Heart right ventricle (tissue), 16 donors: ENCODE measurements at regions of chr5 and their contacts with region 1.

Region 1: DNA sequence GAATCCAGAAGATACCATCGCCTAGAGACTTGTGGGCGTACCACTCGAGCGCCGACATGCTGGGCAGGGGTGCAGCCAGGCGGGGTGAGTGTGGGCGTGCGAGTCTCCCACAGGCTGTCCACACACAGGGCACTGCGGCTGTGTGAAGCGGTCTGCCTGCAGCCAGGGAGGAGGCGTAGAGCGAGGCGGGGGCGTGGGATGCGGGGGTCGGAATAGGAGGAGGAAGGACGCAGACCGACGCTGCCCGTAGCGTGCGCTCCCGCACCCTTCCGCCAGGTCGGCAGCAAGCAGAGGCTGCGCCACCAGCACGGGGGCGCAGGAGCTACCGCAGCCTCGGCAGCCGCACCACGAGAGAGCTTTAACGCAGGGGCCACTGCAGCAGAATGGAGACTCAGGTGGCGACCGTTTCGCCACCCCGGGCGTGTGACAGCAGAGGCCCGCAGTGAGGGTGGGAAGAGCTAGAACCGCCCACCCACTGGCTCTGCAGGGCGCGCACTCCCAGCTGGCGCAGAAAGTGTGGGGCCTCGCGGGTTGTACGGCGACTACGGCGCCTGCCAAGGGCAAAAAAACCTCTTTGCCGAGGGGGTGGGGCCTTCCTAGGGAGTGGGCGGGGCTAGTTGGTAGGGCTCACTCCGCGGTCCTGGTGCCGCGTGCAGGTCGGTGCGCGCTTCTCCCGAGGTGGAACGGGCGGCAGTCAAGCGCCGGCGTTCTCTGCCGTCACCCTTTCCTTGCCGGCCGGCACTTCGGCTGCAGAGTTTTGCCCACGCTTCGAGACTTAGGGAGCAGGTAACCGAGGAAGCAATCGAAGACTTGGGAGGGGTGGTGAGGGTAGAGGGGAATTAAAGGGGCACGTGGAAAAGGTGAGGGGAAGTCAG is at the starts of genes MBLAC2 and POLR3G:
- DNase-seq: peak; percentile 91 to 93
- ATAC-seq: peak; percentile 97 to 99 (median 98)
- H3K4me3 ChIP-seq: peak within 1 kb of the TSS; percentile 65 to 95 (median 82)
- H3K27ac ChIP-seq: peak within 1 kb of the TSS; percentile 8 to 91 (median 82)
- H3K4me1 ChIP-seq: peaks cover 0 to 30% (median 19%) of the 10 kb centered on the region in 9 donors
- H3K27me3 ChIP-seq: no peaks in the 10 kb centered on the region
- CTCF ChIP-seq: peak in 7 of 9 donors; percentile 14 to 60 (median 50)
- total RNA-seq, gene MBLAC2: 3.1 to 4.8 (median 3.5) TPM
- total RNA-seq, gene POLR3G: 0.13 to 2.1 (median 0.54) TPM

Region 2: DNA sequence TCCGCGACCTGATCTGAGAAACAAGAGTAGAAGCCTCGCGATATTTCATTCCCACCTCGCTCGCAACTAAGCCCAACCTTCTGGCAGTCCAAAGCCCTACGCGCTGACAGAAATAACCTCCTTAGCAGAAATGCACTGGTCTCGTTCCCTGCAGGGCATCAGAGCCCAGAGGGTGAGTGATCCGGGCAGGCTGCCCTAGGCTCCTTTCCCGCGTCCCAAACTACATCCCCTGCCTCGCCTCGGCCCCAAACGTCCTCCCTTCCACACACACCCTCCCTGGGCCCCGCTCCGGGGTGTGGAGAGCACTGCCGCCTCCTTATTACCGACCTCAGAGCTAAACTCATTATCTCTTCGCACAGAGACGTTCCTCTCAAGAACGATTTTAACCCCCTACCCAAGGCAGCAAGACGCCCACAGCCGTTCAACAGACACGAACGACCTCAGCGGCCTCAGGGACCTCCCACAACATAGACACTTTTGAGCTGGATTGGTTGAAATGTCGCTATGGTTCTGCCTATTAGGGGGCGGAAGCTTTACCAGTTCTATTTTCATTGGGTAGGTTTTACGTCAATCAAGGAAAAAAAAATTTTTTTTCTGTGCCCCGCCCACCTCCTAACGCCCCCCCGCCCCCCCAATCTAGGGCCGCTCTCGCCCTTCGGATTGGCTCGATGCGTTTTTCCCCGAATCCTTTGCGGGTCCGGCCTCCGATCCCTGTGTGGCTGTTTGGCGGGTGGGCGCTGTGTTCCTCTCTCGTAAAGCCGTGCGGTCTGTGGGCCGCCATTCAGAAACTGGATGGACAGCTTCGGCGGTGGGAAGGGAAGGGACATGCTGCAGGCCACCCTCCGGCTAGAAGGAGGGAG is 64.9 kb before region 1 on chr5 and contains the start of gene CETN3:
- intact Hi-C with region 1: loop called in 2 of 10 experiments (anchors 5 kb)
- DNase-seq: peak; percentile 90 to 94
- ATAC-seq: peak; percentile 98 to 99 (median 98)
- H3K4me3 ChIP-seq: peak within 1 kb of the TSS; percentile 63 to 97 (median 82)
- H3K27ac ChIP-seq: peak within 1 kb of the TSS; percentile 88 to 98 (median 96)
- H3K4me1 ChIP-seq: peaks cover 0 to 35% (median 11%) of the 10 kb centered on the region in 9 donors
- H3K27me3 ChIP-seq: no peaks in the 10 kb centered on the region
- CTCF ChIP-seq: peak in 2 of 9 donors; percentile 7 to 25
- total RNA-seq, gene CETN3: 17.2 to 26.6 (median 21.3) TPM

Region 3: GRCh38 chr5:90440644-90441043 is 33.8 kb before region 1 on chr5:
- intact Hi-C with region 1: loop called in 1 of 10 experiments (anchors 1 kb)
- DNase-seq: no peak
- ATAC-seq: no peak
- H3K4me3 ChIP-seq: peak overlapping the region in 1 of 10 donors; percentile 63
- H3K27ac ChIP-seq: no peak overlapping the region
- H3K4me1 ChIP-seq: peaks cover 0 to 14% (median 7%) of the 10 kb centered on the region in 9 donors
- H3K27me3 ChIP-seq: no peaks in the 10 kb centered on the region
- CTCF ChIP-seq: no peak